Vagina (tissue), 2 donors: ENCODE measurements at regions of chr5 and their contacts with region 1.

Region 1: GRCh38 chr5:81751009-81751835 is at the start of gene SSBP2:
- DNase-seq: peak; percentile 99 to 100
- H3K4me3 ChIP-seq: peak within 1 kb of the TSS; percentile 95 to 97
- H3K27ac ChIP-seq: peak within 1 kb of the TSS; percentile 99
- H3K4me1 ChIP-seq: peaks cover 48% of the 10 kb centered on the region
- H3K27me3 ChIP-seq: no peaks in the 10 kb centered on the region
- CTCF ChIP-seq: no peak
- POLR2A ChIP-seq: peak in 1 of 2 donors; percentile 94
- total RNA-seq, gene SSBP2: 66.3 TPM

Region 2: GRCh38 chr5:81425569-81425968 is 325.7 kb before region 1 on chr5:
- intact Hi-C with region 1: no loop called
- DNase-seq: no peak
- H3K4me3 ChIP-seq: no peak overlapping the region
- H3K27ac ChIP-seq: peak overlapping the region; percentile 27
- H3K4me1 ChIP-seq: peaks cover 26% of the 10 kb centered on the region
- H3K27me3 ChIP-seq: no peaks in the 10 kb centered on the region
- CTCF ChIP-seq: peak; percentile 22 to 64 (median 38)
- POLR2A ChIP-seq: no peak

Region 3: DNA sequence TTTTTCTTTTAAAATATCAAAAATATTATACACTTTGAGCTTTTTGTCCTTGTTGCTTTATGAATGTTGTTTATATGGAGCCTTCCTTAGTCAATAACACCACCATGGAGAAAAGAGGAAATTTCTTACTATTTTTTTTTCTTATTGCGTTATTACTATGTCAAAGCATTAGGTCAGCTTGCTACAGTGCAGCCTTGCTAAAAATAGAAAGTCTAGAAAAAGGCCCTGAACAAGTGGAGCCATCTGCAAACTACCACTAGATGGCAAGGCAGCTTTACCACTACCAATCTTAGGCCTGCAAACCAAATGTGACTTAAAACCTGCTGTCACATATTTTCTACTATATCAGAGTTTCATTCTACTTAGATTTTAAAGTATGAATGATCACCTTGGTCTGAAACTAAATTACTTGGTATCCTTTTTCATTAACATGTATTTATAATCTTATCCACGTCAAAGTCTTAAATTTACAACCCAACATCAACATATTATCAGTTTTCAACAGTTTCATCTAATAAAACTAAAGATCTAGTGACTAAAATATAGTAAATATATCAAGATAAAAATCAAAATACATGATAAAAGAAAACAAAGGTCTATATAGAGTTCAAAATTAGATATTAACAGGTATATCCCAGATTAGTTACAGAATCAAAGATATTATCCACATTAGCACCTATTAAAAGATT is 244.2 kb before region 1 on chr5:
- intact Hi-C with region 1: loop called (anchors 10 kb)
- DNase-seq: peak in 1 of 2 donors; percentile 87
- H3K4me3 ChIP-seq: no peak overlapping the region
- H3K27ac ChIP-seq: peak overlapping the region; percentile 70
- H3K4me1 ChIP-seq: peaks cover 6% of the 10 kb centered on the region
- H3K27me3 ChIP-seq: no peaks in the 10 kb centered on the region
- CTCF ChIP-seq: peak; percentile 58 to 83 (median 77)
- POLR2A ChIP-seq: no peak

Region 4: GRCh38 chr5:81679885-81680284 is 71.3 kb before region 1 on chr5:
- intact Hi-C with region 1: loop called (anchors 2 kb)
- DNase-seq: no peak
- H3K4me3 ChIP-seq: no peak overlapping the region
- H3K27ac ChIP-seq: no peak overlapping the region
- H3K4me1 ChIP-seq: peaks cover 10% of the 10 kb centered on the region
- H3K27me3 ChIP-seq: no peaks in the 10 kb centered on the region
- CTCF ChIP-seq: no peak
- POLR2A ChIP-seq: no peak

Region 5: DNA sequence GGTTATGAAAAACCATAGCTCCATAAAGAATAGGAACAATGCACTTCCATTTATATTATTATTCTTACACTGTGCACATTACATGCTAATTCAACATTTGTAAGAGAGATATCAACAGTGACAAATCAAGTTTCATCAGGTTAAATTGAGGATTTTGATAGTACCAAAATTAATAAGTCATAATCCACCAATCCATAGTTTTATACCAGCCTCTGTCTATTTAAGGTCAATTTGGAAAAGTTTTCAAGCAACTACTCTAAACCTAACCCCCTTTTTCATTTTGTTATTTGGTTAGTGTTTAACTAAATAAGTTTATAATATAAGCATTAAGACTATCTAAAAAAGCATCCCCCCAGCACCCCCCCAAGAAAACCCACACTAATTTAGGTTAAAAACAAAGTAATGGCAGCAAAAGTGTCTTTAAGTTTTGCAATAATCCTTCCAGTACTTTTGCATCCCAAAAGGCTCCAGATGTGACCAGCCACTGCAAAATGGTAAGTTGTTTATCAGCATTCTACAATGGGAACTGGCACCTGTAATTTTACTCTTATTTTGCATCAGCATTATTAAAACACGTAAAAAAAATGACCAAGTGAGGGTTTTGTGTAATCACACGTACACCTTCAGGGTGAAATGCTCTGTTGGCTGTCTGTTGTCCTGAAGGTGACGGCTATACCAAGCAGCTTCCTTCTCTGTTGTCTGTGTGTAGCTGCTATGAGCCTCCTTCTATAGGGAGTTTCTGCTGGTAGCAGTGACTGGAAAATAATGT is 36.4 kb after region 1 on chr5:
- intact Hi-C with region 1: loop called (anchors 5 kb)
- DNase-seq: no peak
- H3K4me3 ChIP-seq: peak overlapping the region; percentile 2 to 12
- H3K27ac ChIP-seq: peak overlapping the region; percentile 49
- H3K4me1 ChIP-seq: peaks cover 41% of the 10 kb centered on the region
- H3K27me3 ChIP-seq: no peaks in the 10 kb centered on the region
- CTCF ChIP-seq: no peak
- POLR2A ChIP-seq: no peak

Region 6: GRCh38 chr5:81851481-81852178 is 100.4 kb after region 1 on chr5:
- intact Hi-C with region 1: loop called (anchors 1 kb)
- DNase-seq: peak in 1 of 2 donors; percentile 97
- H3K4me3 ChIP-seq: peak overlapping the region; percentile 49 to 52
- H3K27ac ChIP-seq: peak overlapping the region; percentile 87
- H3K4me1 ChIP-seq: peaks cover 46% of the 10 kb centered on the region
- H3K27me3 ChIP-seq: no peaks in the 10 kb centered on the region
- CTCF ChIP-seq: no peak
- POLR2A ChIP-seq: peak in 1 of 2 donors; percentile 29

Region 7: GRCh38 chr5:81866994-81867393 is 115.8 kb after region 1 on chr5:
- intact Hi-C with region 1: no loop called
- DNase-seq: no peak
- H3K4me3 ChIP-seq: no peak overlapping the region
- H3K27ac ChIP-seq: no peak overlapping the region
- H3K4me1 ChIP-seq: no peaks in the 10 kb centered on the region
- H3K27me3 ChIP-seq: no peaks in the 10 kb centered on the region
- CTCF ChIP-seq: no peak
- POLR2A ChIP-seq: no peak

Region 8: DNA sequence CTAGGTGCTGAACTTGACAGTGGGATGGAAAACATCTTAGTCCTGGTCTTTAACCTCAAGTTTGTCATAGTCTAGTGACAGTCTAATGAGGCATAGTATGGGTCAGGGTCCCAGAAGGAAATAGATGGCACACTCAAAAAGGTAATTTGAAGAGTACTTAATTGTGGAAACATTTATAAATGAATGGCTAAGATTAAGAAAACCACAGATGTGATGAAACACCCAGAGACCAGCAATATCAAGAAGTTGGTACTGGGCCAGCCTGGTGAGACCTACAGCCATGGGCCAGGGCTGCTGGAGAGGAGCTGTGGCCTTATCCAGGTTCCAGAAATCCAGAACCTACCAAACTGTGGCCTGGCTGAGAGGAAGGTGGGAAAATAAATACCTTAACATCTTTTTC is 127.1 kb after region 1 on chr5:
- intact Hi-C with region 1: no loop called
- DNase-seq: no peak
- H3K4me3 ChIP-seq: no peak overlapping the region
- H3K27ac ChIP-seq: no peak overlapping the region
- H3K4me1 ChIP-seq: no peaks in the 10 kb centered on the region
- H3K27me3 ChIP-seq: no peaks in the 10 kb centered on the region
- CTCF ChIP-seq: no peak
- POLR2A ChIP-seq: no peak

Region 9: DNA sequence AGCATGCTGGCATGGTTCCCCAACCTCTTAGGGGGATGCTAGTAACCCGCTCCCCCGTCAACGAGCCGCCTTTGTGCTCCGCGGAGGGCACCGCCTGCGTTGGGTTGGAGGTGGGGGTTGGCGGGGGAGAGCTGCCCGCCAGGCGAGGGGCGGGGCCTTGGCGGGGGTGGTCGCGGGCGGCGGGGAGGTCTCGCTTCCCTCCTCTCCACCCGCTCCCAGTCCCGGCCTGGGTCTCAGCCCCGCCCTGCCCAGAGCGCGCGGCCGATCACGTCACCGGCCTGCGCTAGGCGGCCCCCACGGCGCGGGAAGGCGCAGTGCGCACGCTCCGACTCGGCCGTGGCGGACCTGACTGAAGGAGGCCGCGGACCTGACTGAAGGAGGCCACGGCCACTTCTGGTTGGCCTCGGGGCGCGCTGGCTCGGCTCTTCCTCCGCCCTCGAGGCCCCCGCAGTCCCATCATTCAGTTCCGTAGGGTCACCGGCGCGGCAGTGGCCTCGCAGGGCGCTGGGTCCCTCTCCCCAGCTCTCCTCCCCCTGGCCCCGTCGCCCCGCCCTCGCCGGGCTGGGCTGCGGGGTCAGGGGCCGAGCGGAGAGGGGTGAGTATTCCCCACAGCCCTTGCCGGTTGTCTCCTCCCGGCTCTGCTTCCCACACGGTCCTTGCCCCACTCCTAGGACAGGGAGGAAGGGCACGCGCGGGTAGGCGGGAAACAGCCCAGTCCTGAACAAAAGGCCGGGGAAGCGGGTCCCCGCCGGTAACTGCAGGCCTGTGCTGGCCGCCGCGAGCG is 220.7 kb after region 1 on chr5 and contains the start of gene ATG10:
- intact Hi-C with region 1: loop called (anchors 2 kb)
- DNase-seq: peak in 1 of 2 donors; percentile 93
- H3K4me3 ChIP-seq: peak within 1 kb of the TSS; percentile 61 to 72
- H3K27ac ChIP-seq: peak within 1 kb of the TSS; percentile 97
- H3K4me1 ChIP-seq: peaks cover 10% of the 10 kb centered on the region
- H3K27me3 ChIP-seq: no peaks in the 10 kb centered on the region
- CTCF ChIP-seq: no peak
- POLR2A ChIP-seq: peak; percentile 59 to 97
- total RNA-seq, gene ATG10: 4.2 TPM

Region 10: DNA sequence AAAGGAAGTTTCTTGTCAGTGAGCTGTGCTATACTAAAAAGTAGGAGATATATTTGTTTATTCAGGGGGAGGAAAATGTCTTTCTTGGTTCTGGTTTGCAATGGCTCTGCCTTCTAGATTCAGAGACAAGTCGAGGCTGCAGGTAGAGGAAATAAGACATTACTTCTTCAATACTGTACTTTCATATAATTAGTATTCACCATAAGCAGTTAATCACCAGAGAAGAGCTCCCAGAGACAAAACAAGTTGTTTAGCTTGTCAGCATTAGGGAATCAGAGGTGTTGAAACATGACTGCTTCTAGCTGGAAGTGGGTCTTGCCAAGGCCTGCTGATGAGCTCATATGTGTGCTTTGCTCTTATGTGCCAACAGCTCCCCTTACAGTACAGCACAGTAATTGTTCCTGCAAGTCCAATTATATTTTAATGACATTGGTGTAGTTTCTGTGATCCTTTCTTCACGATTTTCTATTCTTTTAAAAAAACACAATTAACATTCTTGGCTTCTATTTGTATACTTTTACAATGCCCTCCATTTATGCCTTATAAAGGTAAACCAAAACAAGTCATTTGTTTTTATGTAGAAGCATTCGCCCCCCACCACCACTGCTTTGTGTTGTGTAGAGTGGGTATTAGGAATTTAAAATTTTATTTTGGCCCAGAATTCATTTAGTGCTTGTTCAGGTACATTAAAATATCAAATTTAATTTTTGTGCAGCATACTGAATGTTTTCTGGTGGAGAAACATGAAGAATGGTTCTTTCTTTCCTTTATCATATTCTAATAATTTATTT is 414.7 kb after region 1 on chr5:
- intact Hi-C with region 1: loop called (anchors 5 kb)
- DNase-seq: peak in 1 of 2 donors; percentile 91
- H3K4me3 ChIP-seq: no peak overlapping the region
- H3K27ac ChIP-seq: peak overlapping the region; percentile 52
- H3K4me1 ChIP-seq: peaks cover 22% of the 10 kb centered on the region
- H3K27me3 ChIP-seq: no peaks in the 10 kb centered on the region
- CTCF ChIP-seq: peak in 2 of 3 experiments; percentile 64 to 77
- POLR2A ChIP-seq: no peak